Activated naive CD4-positive, alpha-beta T cell treated with anti-CD3 and anti-CD28 coated beads, Interleukin-2, amount 10 ng/mL, durations not matched to agents 7 days and 5 days (primary cell): ENCODE measurements at regions of chr20 and their contacts with region 1.

Region 1: DNA sequence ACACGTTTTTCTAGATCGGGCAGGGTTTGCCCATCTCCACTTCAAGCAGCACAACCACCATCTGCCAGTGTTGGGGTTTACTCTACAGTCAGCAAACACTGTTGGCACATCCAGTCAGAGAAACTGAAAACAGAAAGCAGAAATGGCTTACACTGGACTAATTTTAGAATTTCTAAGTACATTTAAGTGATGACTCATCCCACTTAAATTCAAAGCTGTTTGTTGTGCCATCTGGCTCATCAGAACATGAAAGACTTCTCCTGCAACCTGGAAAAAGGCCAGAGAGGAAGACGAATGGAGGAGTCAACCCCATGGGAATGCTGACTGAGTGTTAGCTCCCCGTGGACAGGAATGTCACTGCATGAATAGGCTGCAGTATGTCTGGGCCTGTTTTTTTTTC is 21.8 kb downstream of the FAM209B start:
- DNase-seq: no peak
- H3K4me3 Mint-ChIP-seq: no peak overlapping the region
- H3K27ac Mint-ChIP-seq: no peak overlapping the region
- H3K4me1 Mint-ChIP-seq: peaks cover 8% of the 10 kb centered on the region
- H3K27me3 Mint-ChIP-seq: peaks cover 25% of the 10 kb centered on the region

Region 2: DNA sequence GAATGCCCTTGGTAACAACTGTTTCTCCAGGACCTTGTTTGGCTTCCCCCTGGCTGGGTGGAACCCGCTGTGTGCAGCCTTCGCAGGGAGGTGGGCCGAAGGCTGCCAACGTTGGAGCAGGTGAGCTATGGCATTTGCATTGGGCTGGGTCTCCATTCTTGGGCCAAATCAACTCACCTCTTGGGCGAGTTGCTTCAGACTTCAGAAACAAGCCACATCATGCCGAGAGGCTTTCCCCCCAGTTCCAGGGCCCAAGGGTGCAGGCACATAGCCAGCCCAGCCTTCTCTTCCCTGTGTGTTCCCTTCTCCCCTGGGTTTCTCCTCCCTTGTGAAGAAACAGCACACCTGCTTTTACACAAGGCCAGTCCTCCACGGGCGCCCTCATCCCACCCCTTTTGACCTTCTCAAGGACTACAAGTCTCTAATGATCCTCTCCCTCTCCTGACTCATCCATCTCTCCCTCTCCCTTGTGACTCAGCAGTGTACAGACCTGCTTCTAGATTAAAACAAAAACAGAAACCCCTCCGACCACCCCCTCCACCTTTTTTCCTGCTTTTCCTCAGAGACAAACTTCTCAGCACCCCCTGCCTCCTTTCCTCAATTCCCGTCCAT is 19.8 kb after region 1 on chr20:
- CTCF ChIA-PET with region 1: interaction called, 17 read pairs
- DNase-seq: no peak
- H3K4me3 Mint-ChIP-seq: no peak overlapping the region
- H3K27ac Mint-ChIP-seq: no peak overlapping the region
- H3K4me1 Mint-ChIP-seq: no peaks in the 10 kb centered on the region
- H3K27me3 Mint-ChIP-seq: peaks cover 19% of the 10 kb centered on the region

Region 3: GRCh38 chr20:56626367-56627121 is 71.7 kb after region 1 on chr20:
- CTCF ChIA-PET with region 1: no interaction called
- DNase-seq: peak; percentile 21
- H3K4me3 Mint-ChIP-seq: no peak overlapping the region
- H3K27ac Mint-ChIP-seq: no peak overlapping the region
- H3K4me1 Mint-ChIP-seq: peaks cover 20% of the 10 kb centered on the region
- H3K27me3 Mint-ChIP-seq: peaks cover 93% of the 10 kb centered on the region

Region 4: GRCh38 chr20:56974499-56975236 is 419.8 kb after region 1 on chr20:
- CTCF ChIA-PET with region 1: interaction called, 15 read pairs
- DNase-seq: peak; percentile 59
- H3K4me3 Mint-ChIP-seq: no peak overlapping the region
- H3K27ac Mint-ChIP-seq: no peak overlapping the region
- H3K4me1 Mint-ChIP-seq: no peaks in the 10 kb centered on the region
- H3K27me3 Mint-ChIP-seq: peaks cover 55% of the 10 kb centered on the region

Region 5: GRCh38 chr20:56995576-56996075 is 440.8 kb after region 1 on chr20:
- CTCF ChIA-PET with region 1: interaction called, 19 read pairs
- DNase-seq: peak; percentile 26
- H3K4me3 Mint-ChIP-seq: no peak overlapping the region
- H3K27ac Mint-ChIP-seq: no peak overlapping the region
- H3K4me1 Mint-ChIP-seq: no peaks in the 10 kb centered on the region
- H3K27me3 Mint-ChIP-seq: no peaks in the 10 kb centered on the region